ENCODE measurements at regions of chr1 and their contacts with region 1.

Region 1: GRCh38 chr1:245156081-245156735 is 1.4 kb downstream of the KIF26B start:
- DNase-seq: no peak
- H3K4me3 ChIP-seq: peak overlapping the region; percentile 82
- H3K27me3 ChIP-seq: no peaks in the 10 kb centered on the region
- CTCF ChIP-seq: peak; percentile 65

Region 2: GRCh38 chr1:245105815-245106410 is 50.3 kb before region 1 on chr1:
- CTCF ChIA-PET with region 1: no interaction called
- POLR2A ChIA-PET with region 1: no interaction called
- DNase-seq: no peak
- H3K4me3 ChIP-seq: no peak overlapping the region
- H3K27me3 ChIP-seq: no peaks in the 10 kb centered on the region
- CTCF ChIP-seq: no peak

Region 3: GRCh38 chr1:245166471-245166885 is 10.3 kb after region 1 on chr1:
- CTCF ChIA-PET with region 1: interaction called, 13 read pairs
- POLR2A ChIA-PET with region 1: no interaction called
- DNase-seq: no peak
- H3K4me3 ChIP-seq: peak overlapping the region; percentile 23
- H3K27me3 ChIP-seq: no peaks in the 10 kb centered on the region
- CTCF ChIP-seq: no peak

Region 4: GRCh38 chr1:245380790-245381535 is 224.8 kb after region 1 on chr1:
- CTCF ChIA-PET with region 1: interaction called, 13 read pairs
- POLR2A ChIA-PET with region 1: no interaction called
- DNase-seq: no peak
- H3K4me3 ChIP-seq: no peak overlapping the region
- H3K27me3 ChIP-seq: no peaks in the 10 kb centered on the region
- CTCF ChIP-seq: peak; percentile 38

Region 5: GRCh38 chr1:246280551-246280950 is 1124.3 kb after region 1 on chr1:
- CTCF ChIA-PET with region 1: interaction called, 12 read pairs
- POLR2A ChIA-PET with region 1: no interaction called
- DNase-seq: no peak
- H3K4me3 ChIP-seq: no peak overlapping the region
- H3K27me3 ChIP-seq: no peaks in the 10 kb centered on the region
- CTCF ChIP-seq: peak; percentile 24; the same call in 1 of the 2 replicates

Measured in BJ (cell line).